Common myeloid progenitor, CD34-positive (primary cell): ENCODE measurements at regions of chr17 and their contacts with region 1.

Region 1: GRCh38 chr17:41801374-41802271 is 10.1 kb downstream of the P3H4 start:
- DNase-seq: peak; percentile 60 to 72 (median 64)
- H3K4me3 ChIP-seq: no peak overlapping the region
- H3K27ac ChIP-seq: no peak overlapping the region
- H3K4me1 ChIP-seq: peaks cover 0 to 16% (median 12%) of the 10 kb centered on the region in 4 experiments
- H3K27me3 ChIP-seq: no peaks in the 10 kb centered on the region

Region 2: GRCh38 chr17:41738077-41738735 is 63.4 kb before region 1 on chr17:
- CTCF ChIA-PET with region 1: interaction called, 15 read pairs
- POLR2A ChIA-PET with region 1: interaction called, 3 read pairs
- DNase-seq: peak; percentile 78 to 85 (median 82)
- H3K4me3 ChIP-seq: no peak overlapping the region
- H3K27ac ChIP-seq: no peak overlapping the region
- H3K4me1 ChIP-seq: peaks cover 0 to 21% (median 18%) of the 10 kb centered on the region in 4 experiments
- H3K27me3 ChIP-seq: peaks cover 0 to 46% (median 16%) of the 10 kb centered on the region in 5 experiments

Region 3: GRCh38 chr17:41762841-41763240 is 38.8 kb before region 1 on chr17:
- CTCF ChIA-PET with region 1: interaction called, 20 read pairs
- POLR2A ChIA-PET with region 1: interaction called, 3 read pairs
- DNase-seq: no peak
- H3K4me3 ChIP-seq: no peak overlapping the region
- H3K27ac ChIP-seq: no peak overlapping the region
- H3K4me1 ChIP-seq: no peaks in the 10 kb centered on the region
- H3K27me3 ChIP-seq: no peaks in the 10 kb centered on the region

Region 4: GRCh38 chr17:41777574-41778188 is 23.9 kb before region 1 on chr17:
- CTCF ChIA-PET with region 1: interaction called, 18 read pairs
- POLR2A ChIA-PET with region 1: interaction called, 3 read pairs
- DNase-seq: peak in 2 of 3 donors; percentile 62 to 71
- H3K4me3 ChIP-seq: peak overlapping the region in 2 of 7 experiments; percentile 38 to 50
- H3K27ac ChIP-seq: peak overlapping the region in 1 of 2 experiments; percentile 28
- H3K4me1 ChIP-seq: peaks cover 0 to 82% (median 58%) of the 10 kb centered on the region in 4 experiments
- H3K27me3 ChIP-seq: no peaks in the 10 kb centered on the region

Region 5: DNA sequence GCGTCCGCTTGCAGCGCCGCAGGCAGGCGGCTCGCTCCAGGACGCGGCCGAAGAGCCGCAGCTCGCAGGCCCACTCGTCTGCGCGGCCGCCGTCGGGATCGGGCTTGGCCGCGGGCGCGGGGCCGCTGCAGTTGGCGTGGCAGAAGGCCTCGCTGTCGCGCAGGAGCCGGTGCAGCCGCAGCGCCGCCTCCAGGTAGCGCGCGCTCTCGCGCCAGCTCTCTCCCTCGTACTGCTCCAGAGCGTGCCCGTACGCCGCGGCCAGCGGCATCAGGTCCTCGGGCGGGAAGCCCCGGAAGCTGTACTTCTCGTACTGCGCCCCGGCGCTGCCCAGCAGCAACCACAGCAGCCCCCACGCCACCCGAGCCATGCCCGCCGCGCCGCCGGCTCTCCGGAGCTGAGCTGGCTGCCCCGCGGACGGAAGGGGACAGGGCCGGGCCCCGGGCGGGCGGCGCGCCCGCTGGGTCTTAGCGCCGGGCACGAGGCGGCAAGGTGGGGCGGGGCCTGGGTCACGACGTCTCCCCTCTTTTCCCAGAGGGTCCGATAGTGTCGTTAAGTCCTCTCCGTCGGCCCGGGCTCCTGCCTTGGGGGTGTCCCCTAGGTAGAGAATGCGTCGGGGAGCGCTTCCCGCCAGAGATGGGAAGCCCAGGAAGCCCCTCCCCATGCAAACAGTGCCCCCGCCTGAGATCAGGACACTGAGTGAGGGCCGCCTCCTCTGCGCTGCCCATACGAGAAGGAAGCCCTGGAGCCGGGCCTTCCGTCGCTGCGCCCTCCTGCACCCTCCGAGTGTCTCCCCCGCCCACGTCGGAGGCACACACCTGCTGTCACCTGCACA is 10.1 kb after region 1 on chr17 and contains the start of gene P3H4:
- CTCF ChIA-PET with region 1: interaction called, 16 read pairs
- POLR2A ChIA-PET with region 1: no interaction called
- DNase-seq: peak; percentile 77 to 85 (median 79)
- H3K4me3 ChIP-seq: peak within 1 kb of the TSS; percentile 46 to 86 (median 73)
- H3K27ac ChIP-seq: no peak within 1 kb of the TSS
- H3K4me1 ChIP-seq: peaks cover 0 to 25% (median 19%) of the 10 kb centered on the region in 4 experiments
- H3K27me3 ChIP-seq: peaks cover 0 to 8% (median 0%) of the 10 kb centered on the region in 5 experiments